HEK293 (cell line): ENCODE measurements at regions of chr1 and their contacts with region 1.

Region 1: DNA sequence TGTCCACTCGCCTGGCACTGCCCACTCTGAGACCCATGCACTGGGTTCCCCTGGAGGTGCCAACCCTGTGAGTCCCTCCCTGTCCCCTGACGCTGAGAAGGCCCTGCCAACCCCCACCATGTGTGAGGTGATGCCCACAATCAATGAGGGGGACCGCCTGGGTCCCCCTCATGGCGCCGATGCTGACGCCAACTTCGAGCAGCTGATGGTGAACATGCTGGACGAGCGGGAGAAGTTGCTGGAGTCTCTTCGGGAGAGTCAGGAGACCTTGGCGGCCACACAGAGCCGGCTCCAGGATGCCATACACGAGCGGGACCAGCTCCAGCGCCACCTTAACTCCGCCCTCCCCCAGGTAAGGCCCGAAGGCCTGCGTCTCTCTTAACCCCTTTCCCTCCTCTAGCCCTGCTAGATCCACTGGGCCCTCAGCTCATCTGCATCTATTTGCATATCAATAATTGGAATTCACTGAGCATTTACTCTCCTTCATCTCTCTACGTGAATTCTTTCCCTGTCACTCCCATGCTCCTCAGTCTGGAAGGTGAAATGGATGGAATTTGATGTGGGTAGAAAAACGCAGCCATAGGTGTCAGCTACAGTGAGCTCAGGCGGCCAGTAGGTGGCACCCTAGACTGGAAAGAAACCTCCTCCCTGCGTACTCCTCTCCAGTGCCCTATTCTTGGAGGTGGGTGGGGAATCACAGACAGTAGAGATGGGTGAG is 12.8 kb downstream of the PPFIA4 start:
- H3K4me3 ChIP-seq: no peak overlapping the region
- H3K27ac ChIP-seq: no peak overlapping the region
- H3K4me1 ChIP-seq: no peaks in the 10 kb centered on the region; the same call in 1 of the 2 replicates
- CTCF ChIP-seq: peak; percentile 82

Region 2: DNA sequence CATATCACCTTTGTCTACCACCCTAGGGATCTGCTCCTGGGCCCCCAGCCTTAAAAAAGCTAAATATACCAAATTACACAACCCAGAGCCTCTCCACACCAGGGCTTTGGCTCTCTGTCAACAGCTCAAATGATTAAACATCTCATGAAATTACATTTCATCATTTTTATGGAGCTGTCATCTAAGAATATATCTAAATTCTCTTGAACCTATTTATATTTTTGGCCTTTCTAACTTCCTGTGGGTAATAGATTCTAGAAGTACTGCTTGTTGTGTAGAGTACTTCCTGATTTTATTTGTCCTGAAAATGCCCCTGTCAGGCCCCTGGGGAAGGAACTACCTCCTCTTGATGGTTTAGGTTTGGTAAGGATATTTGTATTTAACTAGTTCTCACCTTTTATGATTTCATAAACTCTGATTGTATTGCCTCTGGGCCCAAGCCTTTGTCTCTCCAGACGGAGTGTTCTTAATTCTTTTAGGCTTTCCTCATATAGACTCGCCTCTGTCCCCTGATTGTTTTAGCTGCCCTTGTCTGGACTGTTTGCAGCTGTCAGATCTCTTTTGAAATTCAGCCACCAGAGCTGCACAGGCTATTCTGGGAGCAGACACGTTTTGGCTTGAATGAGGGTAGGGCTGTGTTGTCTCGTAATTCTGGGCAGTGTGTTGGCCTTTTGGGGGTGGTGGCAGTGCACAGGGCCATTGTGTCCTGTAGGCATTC is 30.1 kb after region 1 on chr1:
- CTCF ChIA-PET with region 1: interaction called, 18 read pairs
- POLR2A ChIA-PET with region 1: no interaction called
- H3K4me3 ChIP-seq: no peak overlapping the region
- H3K27ac ChIP-seq: no peak overlapping the region
- H3K4me1 ChIP-seq: no peaks in the 10 kb centered on the region
- CTCF ChIP-seq: no peak

Region 3: GRCh38 chr1:203101915-203102634 is 63.0 kb after region 1 on chr1:
- CTCF ChIA-PET with region 1: interaction called, 21 read pairs
- POLR2A ChIA-PET with region 1: no interaction called
- H3K4me3 ChIP-seq: no peak overlapping the region
- H3K27ac ChIP-seq: no peak overlapping the region
- H3K4me1 ChIP-seq: no peaks in the 10 kb centered on the region
- CTCF ChIP-seq: no peak

Region 4: DNA sequence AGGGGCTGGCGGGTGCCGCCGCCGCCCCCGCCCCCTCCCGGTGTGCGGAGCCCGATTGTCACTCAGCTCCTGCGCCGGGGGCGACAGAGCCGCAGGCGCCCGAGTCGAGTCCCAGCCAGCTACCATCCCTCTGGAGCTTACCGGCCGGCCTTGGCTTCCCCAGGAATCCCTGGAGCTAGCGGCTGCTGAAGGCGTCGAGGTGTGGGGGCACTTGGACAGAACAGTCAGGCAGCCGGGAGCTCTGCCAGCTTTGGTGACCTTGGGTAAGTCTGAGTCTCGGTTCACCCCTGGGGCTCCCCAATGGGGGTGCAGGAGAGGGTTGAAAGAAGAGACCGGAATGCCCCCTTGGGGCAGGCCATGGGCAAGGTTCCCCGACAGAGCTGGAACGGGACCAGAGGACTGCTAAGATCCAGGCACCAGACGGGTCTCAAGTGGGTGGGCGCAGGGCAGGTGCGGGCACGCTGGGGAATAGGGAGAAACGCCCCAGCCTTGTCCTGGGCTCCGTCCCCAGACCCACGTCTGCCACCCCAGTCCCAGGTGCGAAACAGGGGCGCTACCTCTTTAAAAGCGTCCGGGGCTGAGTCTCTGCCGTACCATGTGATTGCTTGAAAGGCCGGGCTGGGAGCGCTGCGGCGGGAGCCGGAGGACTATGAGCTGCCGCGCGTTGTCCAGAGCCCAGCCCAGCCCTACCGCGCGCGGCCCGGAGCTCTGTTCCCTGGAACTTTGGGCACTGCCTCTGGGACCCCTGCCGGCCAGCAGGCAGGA is 88.8 kb after region 1 on chr1 and contains the start of gene ADORA1:
- CTCF ChIA-PET with region 1: interaction called, 70 read pairs
- POLR2A ChIA-PET with region 1: no interaction called
- H3K4me3 ChIP-seq: peak within 1 kb of the TSS; percentile 43
- H3K27ac ChIP-seq: peak within 1 kb of the TSS; percentile 42; the same call in 1 of the 2 replicates
- H3K4me1 ChIP-seq: no peaks in the 10 kb centered on the region
- CTCF ChIP-seq: no peak; the same call in none of the 2 replicates

Region 5: GRCh38 chr1:203172128-203173010 is 133.3 kb after region 1 on chr1:
- CTCF ChIA-PET with region 1: interaction called, 48 read pairs
- POLR2A ChIA-PET with region 1: no interaction called
- H3K4me3 ChIP-seq: no peak overlapping the region
- H3K27ac ChIP-seq: no peak overlapping the region; the same call in 1 of the 2 replicates
- H3K4me1 ChIP-seq: no peaks in the 10 kb centered on the region; the same call in 1 of the 2 replicates
- CTCF ChIP-seq: peak; percentile 85

Region 6: DNA sequence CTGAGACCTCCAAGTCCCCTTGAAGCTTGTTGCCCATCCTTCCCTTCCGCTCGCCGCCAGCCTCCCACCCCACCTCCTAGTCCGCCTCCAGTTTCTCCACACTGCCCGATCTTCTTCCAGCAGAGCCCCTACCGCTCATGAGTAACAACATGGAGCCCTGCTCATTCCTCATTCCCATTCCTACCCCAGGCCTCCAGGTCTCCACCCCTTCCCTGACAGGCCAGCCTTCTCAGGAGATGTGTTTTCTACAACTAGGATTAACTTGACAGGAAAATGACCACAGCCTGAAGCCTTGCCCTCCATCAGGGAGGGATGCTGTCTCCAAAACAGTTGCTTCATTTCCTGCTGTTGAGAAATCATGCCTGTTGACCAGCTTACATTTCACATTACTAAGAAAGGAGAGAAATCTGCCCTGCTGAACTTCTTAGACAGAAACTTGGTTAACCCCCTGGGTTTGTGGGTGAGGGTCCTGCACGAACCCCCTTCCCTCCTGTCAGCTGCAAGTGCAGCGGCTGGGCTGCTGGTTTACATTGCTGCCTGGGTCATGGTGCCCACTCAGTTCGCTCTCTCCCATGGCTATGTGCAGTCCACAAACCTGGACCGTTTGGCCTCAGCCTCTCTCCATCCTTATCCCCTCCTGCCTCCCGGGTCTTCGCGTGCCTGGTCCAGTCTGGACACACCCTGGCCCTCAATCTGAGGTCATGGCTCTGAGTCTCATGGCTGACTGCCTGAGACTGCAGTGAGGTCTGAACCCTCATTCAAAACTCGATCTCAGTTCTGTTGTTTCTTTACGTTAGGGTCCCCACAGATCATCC is 163.6 kb after region 1 on chr1:
- CTCF ChIA-PET with region 1: interaction called, 12 read pairs
- POLR2A ChIA-PET with region 1: no interaction called
- H3K4me3 ChIP-seq: no peak overlapping the region
- H3K27ac ChIP-seq: no peak overlapping the region
- H3K4me1 ChIP-seq: no peaks in the 10 kb centered on the region
- CTCF ChIP-seq: no peak